ENCODE measurements at regions of chr1 and their contacts with region 1.

Region 1: DNA sequence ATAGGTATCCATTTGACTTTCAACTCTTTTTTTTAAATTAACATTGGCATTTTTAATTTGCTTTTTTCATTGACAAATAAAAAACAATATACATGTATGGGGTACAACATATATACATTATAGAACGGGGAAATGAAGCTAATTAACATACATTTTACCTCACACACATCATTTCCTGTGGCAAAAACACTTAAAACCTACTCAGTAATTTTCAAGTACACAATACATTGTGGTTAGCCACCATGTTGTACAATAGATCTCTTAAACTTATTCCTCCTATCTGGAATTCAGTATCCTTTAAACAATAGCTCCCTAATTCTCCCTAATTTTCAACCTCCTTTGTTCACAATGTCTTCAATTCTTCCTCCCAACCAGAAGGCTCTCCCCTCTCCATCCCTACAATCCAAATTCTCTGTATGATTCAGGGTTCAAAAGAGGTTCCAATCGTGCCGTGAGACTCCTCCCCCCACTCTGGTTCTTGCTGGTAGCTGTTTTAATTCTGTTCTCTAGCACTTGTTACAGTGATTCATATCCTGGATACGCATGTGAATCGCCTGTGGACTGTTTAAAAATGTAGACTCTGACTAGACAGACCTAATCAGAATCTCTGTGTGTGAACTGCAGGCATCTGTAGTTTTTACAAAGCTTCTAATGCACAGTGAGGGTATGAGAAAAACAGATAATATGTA is 87.6 kb upstream of the DUSP10 start:
- DNase-seq: peak in 4 of 5 donors; percentile 29 to 70 (median 50)
- H3K4me3 ChIP-seq: peak overlapping the region; percentile 20
- H3K4me3 Mint-ChIP-seq: peak overlapping the region; percentile 52 to 81 (median 80)
- H3K27ac ChIP-seq: peak overlapping the region; percentile 70
- H3K27ac Mint-ChIP-seq: peak overlapping the region; percentile 76 to 98 (median 97)
- H3K4me1 ChIP-seq: peaks cover 27% of the 10 kb centered on the region
- H3K4me1 Mint-ChIP-seq: peaks cover 48 to 62% (median 56%) of the 10 kb centered on the region in 3 donors
- H3K27me3 ChIP-seq: no peaks in the 10 kb centered on the region
- H3K27me3 Mint-ChIP-seq: no peaks in the 10 kb centered on the region

Region 2: DNA sequence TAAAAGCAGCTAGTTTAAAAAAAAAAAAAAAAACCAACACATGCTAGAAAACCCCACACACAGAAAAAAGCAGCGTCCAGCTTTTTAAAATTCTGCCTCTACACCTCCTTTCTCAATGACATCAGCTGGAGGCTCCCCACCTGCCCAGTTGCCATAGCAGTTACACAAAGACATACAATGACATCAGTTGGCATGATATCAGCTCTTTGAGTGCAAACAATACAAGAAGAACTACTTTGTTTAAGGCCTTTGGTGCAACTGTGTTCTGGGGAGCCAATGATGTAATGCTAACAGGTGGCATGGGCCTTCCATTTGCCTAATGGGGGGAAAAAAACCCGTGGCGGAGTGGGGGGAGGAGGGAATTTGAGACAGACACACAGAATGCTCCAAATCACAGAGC is 120.5 kb before region 1 on chr1:
- CTCF ChIA-PET with region 1: no interaction called
- POLR2A ChIA-PET with region 1: interaction called, 12 read pairs
- DNase-seq: peak; percentile 53 to 85 (median 54)
- H3K4me3 ChIP-seq: no peak overlapping the region
- H3K4me3 Mint-ChIP-seq: peak overlapping the region in 4 of 7 donors; percentile 1 to 38 (median 37)
- H3K27ac ChIP-seq: peak overlapping the region; percentile 60
- H3K27ac Mint-ChIP-seq: peak overlapping the region; percentile 39 to 97 (median 93)
- H3K4me1 ChIP-seq: peaks cover 65% of the 10 kb centered on the region
- H3K4me1 Mint-ChIP-seq: peaks cover 68 to 79% (median 72%) of the 10 kb centered on the region in 3 donors
- H3K27me3 ChIP-seq: no peaks in the 10 kb centered on the region
- H3K27me3 Mint-ChIP-seq: no peaks in the 10 kb centered on the region

Region 3: DNA sequence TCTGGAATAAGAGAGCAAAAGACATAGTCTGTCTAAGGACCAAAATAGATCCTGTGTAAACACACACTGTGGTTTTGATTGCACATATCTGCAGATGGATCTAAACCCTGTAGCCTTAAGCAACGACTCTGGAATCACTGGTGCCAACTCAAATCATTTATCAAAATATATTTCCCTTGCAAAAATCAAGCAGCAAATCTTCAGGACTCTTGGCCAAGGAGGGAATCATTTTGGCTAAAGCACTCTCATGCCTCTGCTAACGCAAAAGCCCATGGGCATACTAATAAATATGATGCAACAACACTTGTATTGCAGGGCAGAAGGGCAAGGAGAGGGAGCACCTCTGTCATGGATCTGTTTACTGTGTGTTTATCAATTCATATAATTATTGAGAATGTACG is 67.8 kb after region 1 on chr1:
- CTCF ChIA-PET with region 1: no interaction called
- POLR2A ChIA-PET with region 1: no interaction called
- DNase-seq: no peak
- H3K4me3 ChIP-seq: no peak overlapping the region
- H3K4me3 Mint-ChIP-seq: no peak overlapping the region
- H3K27ac ChIP-seq: no peak overlapping the region
- H3K27ac Mint-ChIP-seq: no peak overlapping the region
- H3K4me1 ChIP-seq: no peaks in the 10 kb centered on the region
- H3K4me1 Mint-ChIP-seq: no peaks in the 10 kb centered on the region
- H3K27me3 ChIP-seq: no peaks in the 10 kb centered on the region
- H3K27me3 Mint-ChIP-seq: no peaks in the 10 kb centered on the region